Upper lobe of right lung (tissue), 1 donor: ENCODE measurements at regions of chr17 and their contacts with region 1.

Region 1: GRCh38 chr17:78176548-78177025 is 8.2 kb downstream of the SYNGR2 start:
- DNase-seq: peak; percentile 91
- ATAC-seq: peak; percentile 59
- H3K4me3 ChIP-seq: no peak overlapping the region
- H3K27ac ChIP-seq: peak overlapping the region; percentile 87
- H3K4me1 ChIP-seq: peaks cover 75% of the 10 kb centered on the region
- H3K27me3 ChIP-seq: no peaks in the 10 kb centered on the region
- CTCF ChIP-seq: peak; percentile 94

Region 2: DNA sequence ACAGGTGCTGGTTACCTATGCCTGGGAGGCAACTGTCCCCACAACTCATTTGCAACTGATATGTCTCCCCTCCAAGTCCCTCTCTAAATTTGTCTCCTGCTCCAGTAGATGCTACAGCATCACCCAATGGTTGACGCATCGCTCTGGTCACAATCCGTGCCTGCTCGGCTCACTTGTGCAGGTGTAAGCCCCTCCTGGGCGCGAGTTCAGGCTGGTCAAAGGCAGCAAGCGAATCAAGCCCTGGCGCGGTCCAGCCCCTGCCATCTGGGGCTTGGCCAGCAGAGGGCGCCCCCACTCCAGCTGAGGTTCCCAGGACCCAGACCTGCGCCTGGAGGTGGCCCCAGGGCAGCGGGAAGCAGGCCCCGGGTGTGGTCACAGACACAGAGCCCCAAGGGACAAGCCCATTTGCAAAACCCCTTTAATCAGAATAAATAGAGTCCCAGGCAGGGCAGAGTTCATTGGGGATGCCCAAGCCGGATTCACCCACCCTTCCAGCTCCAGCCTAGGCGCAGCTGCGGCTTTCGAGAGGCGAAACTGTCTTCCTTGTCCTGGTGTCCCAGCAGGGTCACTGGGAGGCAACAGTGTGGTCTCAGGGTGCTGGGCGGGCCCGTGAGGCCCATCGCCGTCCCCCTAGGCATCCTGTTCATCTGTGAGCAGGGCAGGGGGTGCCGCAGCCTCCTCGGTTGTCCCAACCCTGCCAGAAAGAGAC is 63.9 kb before region 1 on chr17:
- intact Hi-C with region 1: loop called (anchors 10 kb)
- DNase-seq: peak; percentile 89
- ATAC-seq: peak; percentile 87
- H3K4me3 ChIP-seq: no peak overlapping the region
- H3K27ac ChIP-seq: no peak overlapping the region
- H3K4me1 ChIP-seq: peaks cover 6% of the 10 kb centered on the region
- H3K27me3 ChIP-seq: no peaks in the 10 kb centered on the region
- CTCF ChIP-seq: peak; percentile 100